CD8-positive, alpha-beta T cell (primary cell): ENCODE measurements at regions of chr1 and their contacts with region 1.

Region 1: GRCh38 chr1:40774266-40774998 is 9.2 kb upstream of the KCNQ4 start:
- DNase-seq: peak; percentile 43 to 81 (median 72)
- ATAC-seq: peak; percentile 66
- H3K4me3 ChIP-seq: no peak overlapping the region
- H3K4me3 Mint-ChIP-seq: no peak overlapping the region
- H3K27ac ChIP-seq: no peak overlapping the region
- H3K27ac Mint-ChIP-seq: no peak overlapping the region
- H3K4me1 ChIP-seq: no peaks in the 10 kb centered on the region
- H3K4me1 Mint-ChIP-seq: no peaks in the 10 kb centered on the region
- H3K27me3 ChIP-seq: no peaks in the 10 kb centered on the region
- H3K27me3 Mint-ChIP-seq: no peaks in the 10 kb centered on the region
- CTCF ChIP-seq: peak; percentile 84

Region 2: GRCh38 chr1:40612345-40612831 is 162.0 kb before region 1 on chr1:
- CTCF ChIA-PET with region 1: interaction called, 4 read pairs
- POLR2A ChIA-PET with region 1: no interaction called
- intact Hi-C with region 1: loop called (anchors 2 to 5 kb)
- DNase-seq: peak; percentile 44 to 80 (median 68)
- ATAC-seq: peak; percentile 95
- H3K4me3 ChIP-seq: no peak overlapping the region
- H3K4me3 Mint-ChIP-seq: no peak overlapping the region
- H3K27ac ChIP-seq: no peak overlapping the region
- H3K27ac Mint-ChIP-seq: no peak overlapping the region
- H3K4me1 ChIP-seq: no peaks in the 10 kb centered on the region
- H3K4me1 Mint-ChIP-seq: no peaks in the 10 kb centered on the region
- H3K27me3 ChIP-seq: no peaks in the 10 kb centered on the region
- H3K27me3 Mint-ChIP-seq: no peaks in the 10 kb centered on the region
- CTCF ChIP-seq: peak; percentile 82

Region 3: DNA sequence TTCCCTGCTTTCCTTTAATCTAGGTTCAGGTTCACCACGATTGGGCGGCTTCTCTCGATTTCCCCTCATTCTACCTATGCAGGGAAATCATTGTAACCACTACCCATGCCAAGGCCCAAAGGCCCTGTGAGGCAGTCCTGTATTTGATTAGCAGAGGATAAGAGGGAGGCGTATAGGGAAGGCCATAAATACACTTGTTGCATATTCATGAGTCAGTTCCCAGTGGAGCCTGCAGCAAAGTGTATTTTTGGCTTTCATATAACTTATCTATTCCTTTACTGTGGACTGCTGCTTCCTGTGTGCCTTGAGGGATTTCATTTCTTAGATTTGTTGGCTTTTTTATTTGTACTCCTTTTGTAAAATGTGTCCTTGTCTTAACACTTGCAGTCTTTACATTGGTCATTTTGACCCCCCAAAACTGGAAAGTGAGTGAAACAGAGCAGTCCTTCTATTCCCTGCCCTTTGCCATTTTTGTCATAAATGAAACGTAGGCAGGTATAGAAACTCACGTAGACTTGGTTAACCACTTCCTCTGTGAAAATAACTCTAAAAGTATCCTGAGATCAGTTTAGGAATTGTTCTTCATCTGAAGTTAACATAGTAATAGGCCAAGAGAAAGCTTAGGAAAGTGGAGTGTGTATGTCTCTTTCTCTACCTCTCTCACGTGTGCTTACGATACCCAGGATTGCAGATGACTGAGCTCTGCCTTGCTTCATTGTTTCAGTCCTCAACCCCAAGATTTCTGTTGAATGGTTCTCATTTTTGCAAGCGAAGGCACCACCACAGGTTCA is 10.5 kb before region 1 on chr1:
- CTCF ChIA-PET with region 1: interaction called, 38 read pairs
- POLR2A ChIA-PET with region 1: no interaction called
- intact Hi-C with region 1: no loop called
- DNase-seq: peak in 1 of 9 experiments; percentile 34
- ATAC-seq: peak; percentile 57
- H3K4me3 ChIP-seq: no peak overlapping the region
- H3K4me3 Mint-ChIP-seq: peak overlapping the region; percentile 42
- H3K27ac ChIP-seq: peak overlapping the region in 1 of 2 experiments; percentile 9
- H3K27ac Mint-ChIP-seq: peak overlapping the region; percentile 83
- H3K4me1 ChIP-seq: peaks cover 21% of the 10 kb centered on the region
- H3K4me1 Mint-ChIP-seq: peaks cover 30% of the 10 kb centered on the region
- H3K27me3 ChIP-seq: no peaks in the 10 kb centered on the region
- H3K27me3 Mint-ChIP-seq: no peaks in the 10 kb centered on the region
- CTCF ChIP-seq: no peak

Region 4: GRCh38 chr1:40825435-40825788 is 51.0 kb after region 1 on chr1:
- CTCF ChIA-PET with region 1: interaction called, 21 read pairs
- POLR2A ChIA-PET with region 1: no interaction called
- intact Hi-C with region 1: no loop called
- DNase-seq: no peak
- ATAC-seq: no peak
- H3K4me3 ChIP-seq: no peak overlapping the region
- H3K4me3 Mint-ChIP-seq: no peak overlapping the region
- H3K27ac ChIP-seq: no peak overlapping the region
- H3K27ac Mint-ChIP-seq: no peak overlapping the region
- H3K4me1 ChIP-seq: peaks cover 19% of the 10 kb centered on the region
- H3K4me1 Mint-ChIP-seq: peaks cover 17% of the 10 kb centered on the region
- H3K27me3 ChIP-seq: no peaks in the 10 kb centered on the region
- H3K27me3 Mint-ChIP-seq: no peaks in the 10 kb centered on the region
- CTCF ChIP-seq: no peak

Region 5: DNA sequence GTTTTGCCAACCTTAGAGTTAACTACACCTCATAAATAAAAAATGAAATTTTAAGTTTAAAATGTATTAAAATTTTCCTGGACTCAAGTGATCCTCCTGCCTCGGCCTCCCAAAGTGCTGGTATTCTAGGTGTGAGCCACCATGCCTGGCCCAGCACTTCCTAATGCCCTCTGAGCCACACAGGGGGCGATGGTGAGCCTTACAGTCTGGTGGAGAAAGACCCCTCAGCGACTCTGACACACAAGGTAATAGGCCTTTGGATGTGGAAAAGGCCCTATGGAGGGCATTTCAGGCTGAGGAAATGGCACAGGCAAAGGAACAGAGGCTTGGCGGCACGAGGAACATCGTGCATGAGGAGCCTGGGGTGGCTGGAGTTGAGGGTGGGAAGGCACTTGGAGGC is 81.1 kb after region 1 on chr1:
- CTCF ChIA-PET with region 1: interaction called, 286 read pairs
- POLR2A ChIA-PET with region 1: interaction called, 4 read pairs
- intact Hi-C with region 1: loop called (anchors 1 kb)
- DNase-seq: peak in 2 of 9 experiments; percentile 35 to 44
- ATAC-seq: no peak
- H3K4me3 ChIP-seq: no peak overlapping the region
- H3K4me3 Mint-ChIP-seq: no peak overlapping the region
- H3K27ac ChIP-seq: no peak overlapping the region
- H3K27ac Mint-ChIP-seq: no peak overlapping the region
- H3K4me1 ChIP-seq: peaks cover 3% of the 10 kb centered on the region
- H3K4me1 Mint-ChIP-seq: peaks cover 3% of the 10 kb centered on the region
- H3K27me3 ChIP-seq: no peaks in the 10 kb centered on the region
- H3K27me3 Mint-ChIP-seq: no peaks in the 10 kb centered on the region
- CTCF ChIP-seq: no peak